Heart right ventricle (tissue), 16 donors: ENCODE measurements at regions of chr9 and their contacts with region 1.

Region 1: DNA sequence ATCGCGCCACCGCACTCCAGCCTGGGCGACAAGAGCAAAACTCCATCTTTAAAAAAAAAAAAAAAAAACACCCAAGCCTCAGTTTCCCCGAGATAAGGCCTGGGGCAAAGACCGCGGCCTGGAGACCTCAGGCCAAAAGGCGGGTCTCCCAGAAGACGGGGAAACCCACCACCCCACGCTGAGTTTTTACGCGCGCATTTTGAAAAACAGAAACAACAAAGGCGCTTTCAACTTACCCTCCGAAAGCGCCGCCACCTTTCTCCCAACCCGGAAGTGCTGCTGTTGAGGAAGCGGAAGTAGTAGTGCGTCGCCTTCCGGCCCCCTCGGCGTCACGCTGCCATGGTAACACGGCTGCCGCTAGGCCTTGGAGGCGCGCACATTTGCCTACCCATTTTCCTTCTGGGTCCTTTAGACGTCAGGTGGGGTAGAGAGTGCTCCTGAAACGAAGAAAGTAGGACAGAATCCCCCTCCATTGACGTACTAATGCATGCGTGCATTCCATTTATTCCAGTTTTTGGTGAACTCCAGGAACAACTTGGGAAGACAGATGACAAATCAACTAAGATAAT is at the start of gene TTF1:
- DNase-seq: peak; percentile 91 to 93
- ATAC-seq: peak; percentile 64 to 92 (median 84)
- H3K4me3 ChIP-seq: peak within 1 kb of the TSS; percentile 67 to 96 (median 82)
- H3K27ac ChIP-seq: peak within 1 kb of the TSS; percentile 47 to 83 (median 76)
- H3K4me1 ChIP-seq: peaks cover 15 to 69% (median 57%) of the 10 kb centered on the region in 9 donors
- H3K27me3 ChIP-seq: peaks cover 0 to 26% (median 19%) of the 10 kb centered on the region in 7 donors
- CTCF ChIP-seq: no peak
- total RNA-seq, gene TTF1: 12.0 to 19.1 (median 15.8) TPM

Region 2: GRCh38 chr9:132354637-132355355 is 51.8 kb before region 1 on chr9 and contains the start of gene SETX:
- intact Hi-C with region 1: loop called in 1 of 10 experiments (anchors 5 kb)
- DNase-seq: peak; percentile 96 to 98
- ATAC-seq: peak; percentile 98 to 99 (median 98)
- H3K4me3 ChIP-seq: peak within 1 kb of the TSS; percentile 67 to 100 (median 82)
- H3K27ac ChIP-seq: peak within 1 kb of the TSS; percentile 73 to 99 (median 96)
- H3K4me1 ChIP-seq: peaks cover 11 to 47% (median 37%) of the 10 kb centered on the region in 9 donors
- H3K27me3 ChIP-seq: no peaks in the 10 kb centered on the region
- CTCF ChIP-seq: peak in 1 of 9 donors; percentile 8
- total RNA-seq, gene SETX: 20.2 to 35.1 (median 28.1) TPM

Region 3: GRCh38 chr9:132447346-132447745 is 40.7 kb after region 1 on chr9:
- intact Hi-C with region 1: no loop called
- DNase-seq: no peak
- ATAC-seq: no peak
- H3K4me3 ChIP-seq: no peak overlapping the region
- H3K27ac ChIP-seq: no peak overlapping the region
- H3K4me1 ChIP-seq: no peaks in the 10 kb centered on the region
- H3K27me3 ChIP-seq: peaks cover 0 to 17% (median 12%) of the 10 kb centered on the region in 7 donors
- CTCF ChIP-seq: peak in 1 of 9 donors; percentile 13

Region 4: GRCh38 chr9:132498531-132499210 is 92.0 kb after region 1 on chr9:
- intact Hi-C with region 1: loop called in 4 of 10 experiments (anchors 5 to 10 kb)
- DNase-seq: no peak
- ATAC-seq: no peak
- H3K4me3 ChIP-seq: no peak overlapping the region
- H3K27ac ChIP-seq: no peak overlapping the region
- H3K4me1 ChIP-seq: no peaks in the 10 kb centered on the region
- H3K27me3 ChIP-seq: peaks cover 0 to 18% (median 15%) of the 10 kb centered on the region in 7 donors
- CTCF ChIP-seq: no peak

Region 5: GRCh38 chr9:132507746-132508469 is 101.3 kb after region 1 on chr9:
- intact Hi-C with region 1: loop called in 4 of 10 experiments (anchors 5 to 10 kb)
- DNase-seq: peak; percentile 37 to 62
- ATAC-seq: peak in 6 of 8 donors; percentile 43 to 76 (median 62)
- H3K4me3 ChIP-seq: no peak overlapping the region
- H3K27ac ChIP-seq: no peak overlapping the region
- H3K4me1 ChIP-seq: peaks cover 0 to 11% (median 0%) of the 10 kb centered on the region in 9 donors
- H3K27me3 ChIP-seq: peaks cover 0 to 59% (median 31%) of the 10 kb centered on the region in 7 donors
- CTCF ChIP-seq: peak; percentile 57 to 87 (median 77)

Region 6: GRCh38 chr9:132575005-132575609 is 168.5 kb after region 1 on chr9:
- intact Hi-C with region 1: loop called in 9 of 10 experiments (anchors 1 to 5 kb)
- DNase-seq: peak; percentile 67 to 71
- ATAC-seq: peak; percentile 51 to 89 (median 86)
- H3K4me3 ChIP-seq: no peak overlapping the region
- H3K27ac ChIP-seq: no peak overlapping the region
- H3K4me1 ChIP-seq: peaks cover 0 to 5% (median 0%) of the 10 kb centered on the region in 9 donors
- H3K27me3 ChIP-seq: peaks cover 14 to 71% (median 62%) of the 10 kb centered on the region in 7 donors
- CTCF ChIP-seq: peak; percentile 45 to 85 (median 77)

Region 7: DNA sequence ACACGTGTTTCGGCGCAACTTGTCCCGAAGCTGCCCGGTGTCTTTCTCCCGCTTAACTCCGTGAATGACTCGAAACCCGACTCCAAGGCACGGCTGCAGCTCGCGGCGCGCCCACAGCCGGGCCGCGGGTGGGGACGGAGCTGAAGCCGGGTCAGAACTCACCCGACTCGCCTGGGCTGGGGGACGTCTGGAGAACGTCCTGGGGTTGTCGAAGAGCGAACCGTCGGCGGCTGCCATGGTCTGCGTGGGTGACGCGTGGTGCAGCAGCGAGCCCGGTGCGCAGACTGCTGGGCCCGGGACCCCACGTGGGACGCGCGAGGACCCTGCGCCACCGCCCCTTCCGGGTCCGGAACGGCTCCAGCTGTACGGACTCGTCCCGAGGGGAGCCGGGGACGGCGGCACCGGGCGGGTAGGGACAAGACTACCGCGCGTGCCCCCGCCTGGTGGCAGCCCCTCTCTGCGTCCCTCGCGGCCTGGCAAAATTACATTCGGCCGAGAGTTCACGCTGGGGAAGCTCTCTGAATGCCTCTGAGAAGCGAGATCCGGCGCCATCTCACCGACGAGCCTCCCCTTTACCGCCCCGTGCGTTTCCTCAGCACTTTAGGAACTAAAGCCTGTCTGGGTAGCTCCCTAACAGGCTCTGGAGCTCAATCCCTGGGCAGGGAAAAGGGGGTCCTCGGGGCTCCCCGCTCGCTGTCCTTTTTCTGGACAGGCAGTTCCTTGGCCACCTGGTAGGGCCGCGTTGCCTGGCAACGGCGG is 263.2 kb after region 1 on chr9 and contains the start of gene DDX31:
- intact Hi-C with region 1: no loop called
- DNase-seq: peak; percentile 86 to 88
- ATAC-seq: peak; percentile 97 to 99 (median 98)
- H3K4me3 ChIP-seq: peak within 1 kb of the TSS; percentile 71 to 98 (median 86)
- H3K27ac ChIP-seq: peak within 1 kb of the TSS; percentile 93 to 99 (median 98)
- H3K4me1 ChIP-seq: peaks cover 6 to 48% (median 30%) of the 10 kb centered on the region in 9 donors
- H3K27me3 ChIP-seq: no peaks in the 10 kb centered on the region
- CTCF ChIP-seq: peak in 1 of 9 donors; percentile 22
- total RNA-seq, gene DDX31: 4.2 to 6.4 (median 5.1) TPM

Region 8: GRCh38 chr9:132901856-132902831 is 495.5 kb after region 1 on chr9:
- intact Hi-C with region 1: loop called in 1 of 10 experiments (anchors 10 kb)
- DNase-seq: peak; percentile 36 to 60
- ATAC-seq: peak; percentile 38 to 78 (median 66)
- H3K4me3 ChIP-seq: no peak overlapping the region
- H3K27ac ChIP-seq: peak overlapping the region in 1 of 10 donors; percentile 11
- H3K4me1 ChIP-seq: peaks cover 0 to 3% (median 2%) of the 10 kb centered on the region in 9 donors
- H3K27me3 ChIP-seq: no peaks in the 10 kb centered on the region
- CTCF ChIP-seq: peak; percentile 76 to 94 (median 90)

Region 9: GRCh38 chr9:132973713-132974112 is 567.1 kb after region 1 on chr9:
- intact Hi-C with region 1: loop called in 1 of 10 experiments (anchors 10 kb)
- DNase-seq: no peak
- ATAC-seq: no peak
- H3K4me3 ChIP-seq: no peak overlapping the region
- H3K27ac ChIP-seq: no peak overlapping the region
- H3K4me1 ChIP-seq: peaks cover 0 to 12% (median 3%) of the 10 kb centered on the region in 9 donors
- H3K27me3 ChIP-seq: peaks cover 3 to 62% (median 33%) of the 10 kb centered on the region in 7 donors
- CTCF ChIP-seq: no peak